CD4-positive, alpha-beta T cell (primary cell): ENCODE measurements at regions of chr1 and their contacts with region 1.

Region 1: DNA sequence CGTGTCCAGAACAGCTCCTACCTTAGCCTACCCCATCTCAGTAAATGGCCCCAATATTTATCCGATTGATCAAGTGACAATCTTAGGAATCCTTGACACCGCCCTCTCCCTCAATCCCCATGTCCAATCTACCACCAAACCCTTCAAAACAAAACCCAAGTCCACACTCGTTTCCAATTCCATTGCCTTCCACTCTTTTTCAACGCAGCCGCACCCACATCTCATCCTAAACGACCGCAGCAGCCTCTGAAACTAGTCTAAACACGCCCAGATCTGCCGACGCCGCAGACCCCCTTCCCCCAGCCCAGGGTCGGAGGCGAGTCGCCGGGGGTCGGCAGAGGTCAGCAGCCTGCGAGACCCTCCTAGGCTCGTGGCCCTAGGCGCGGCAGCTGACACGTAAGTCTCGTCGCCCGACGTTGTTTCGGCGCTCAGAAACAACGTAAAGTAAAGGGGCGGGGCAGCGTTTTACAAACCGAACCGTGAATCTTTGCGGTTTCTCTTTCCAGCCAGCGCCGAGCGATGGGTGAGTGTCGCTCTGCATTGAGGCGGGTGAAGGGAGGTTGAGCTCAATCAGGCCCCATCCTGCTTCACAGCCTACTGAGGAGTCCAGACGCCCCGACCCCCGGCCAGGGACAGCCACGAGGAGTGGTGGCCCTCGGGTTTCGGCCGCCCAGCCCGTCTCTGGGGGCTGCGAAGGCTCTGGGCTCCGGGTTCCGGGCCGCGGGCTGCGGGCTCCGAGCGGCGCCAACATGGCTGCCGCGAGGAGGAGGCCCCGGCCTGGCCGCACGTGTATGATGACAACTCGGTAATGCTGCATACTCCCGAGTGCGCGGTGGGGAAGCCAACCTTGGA is at the start of gene RPS8:
- DNase-seq: peak; percentile 82 to 95 (median 86)
- ATAC-seq: peak; percentile 83
- H3K4me3 ChIP-seq: peak within 1 kb of the TSS; percentile 77
- H3K4me3 Mint-ChIP-seq: peak within 1 kb of the TSS; percentile 90
- H3K27ac ChIP-seq: peak within 1 kb of the TSS; percentile 91
- H3K27ac Mint-ChIP-seq: peak within 1 kb of the TSS; percentile 89
- H3K4me1 ChIP-seq: peaks cover 33% of the 10 kb centered on the region
- H3K4me1 Mint-ChIP-seq: peaks cover 54% of the 10 kb centered on the region
- H3K27me3 ChIP-seq: no peaks in the 10 kb centered on the region
- H3K27me3 Mint-ChIP-seq: no peaks in the 10 kb centered on the region
- CTCF ChIP-seq: no peak
- total RNA-seq, gene RPS8: 3,394 to 3,436 TPM

Region 2: GRCh38 chr1:44631647-44632539 is 143.4 kb before region 1 on chr1:
- CTCF ChIA-PET with region 1: no interaction called
- POLR2A ChIA-PET with region 1: interaction called, 8 read pairs
- intact Hi-C with region 1: loop called in 1 of 2 experiments (anchors 5 kb)
- DNase-seq: peak; percentile 80 to 93 (median 86)
- ATAC-seq: peak; percentile 75
- H3K4me3 ChIP-seq: peak overlapping the region; percentile 71
- H3K4me3 Mint-ChIP-seq: peak overlapping the region; percentile 92
- H3K27ac ChIP-seq: peak overlapping the region; percentile 73 to 88
- H3K27ac Mint-ChIP-seq: peak overlapping the region; percentile 98
- H3K4me1 ChIP-seq: peaks cover 27% of the 10 kb centered on the region
- H3K4me1 Mint-ChIP-seq: peaks cover 48% of the 10 kb centered on the region
- H3K27me3 ChIP-seq: no peaks in the 10 kb centered on the region
- H3K27me3 Mint-ChIP-seq: no peaks in the 10 kb centered on the region
- CTCF ChIP-seq: no peak

Region 3: DNA sequence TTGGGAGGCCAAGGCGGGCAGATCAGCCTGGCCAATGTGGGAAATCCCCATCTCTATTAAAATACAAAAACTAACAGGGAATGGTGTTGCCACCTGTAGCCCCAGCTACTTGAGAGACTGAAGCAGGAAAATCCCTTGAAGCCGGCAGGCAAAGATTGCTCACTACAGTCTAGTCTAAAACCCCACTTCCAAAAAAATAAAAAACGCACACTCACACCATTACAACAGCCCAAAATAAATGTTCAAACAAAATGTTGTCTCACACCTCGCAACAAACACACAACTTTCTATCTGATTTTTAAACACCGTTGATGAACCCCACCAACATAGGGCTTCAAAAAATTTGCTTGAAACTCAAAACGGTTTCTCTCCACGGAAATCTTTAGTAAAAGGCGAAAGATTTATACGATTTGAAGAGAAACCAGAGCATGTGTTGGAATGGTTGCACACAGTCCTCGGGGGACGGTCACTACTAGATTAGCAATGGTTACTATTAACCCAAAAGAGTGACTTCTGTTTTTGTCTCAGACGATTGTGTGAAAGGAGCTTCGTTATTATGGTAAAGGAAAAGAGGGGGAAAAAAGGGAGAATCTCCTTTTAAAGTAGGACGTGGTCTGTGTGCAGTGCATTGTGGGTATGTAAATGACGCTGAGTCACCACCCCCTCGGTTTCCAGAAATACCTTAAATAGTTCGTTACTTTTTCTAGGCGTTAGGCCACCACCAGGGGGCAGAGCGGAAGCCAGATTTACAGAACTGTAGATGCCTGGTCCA is 44.4 kb before region 1 on chr1 and contains the start of gene RNU5D-1:
- CTCF ChIA-PET with region 1: interaction called, 20 read pairs
- POLR2A ChIA-PET with region 1: interaction called, 65 read pairs
- intact Hi-C with region 1: loop called (anchors 1 to 5 kb)
- DNase-seq: peak; percentile 87 to 98 (median 94)
- ATAC-seq: peak; percentile 76
- H3K4me3 ChIP-seq: peak within 1 kb of the TSS; percentile 46
- H3K4me3 Mint-ChIP-seq: peak within 1 kb of the TSS; percentile 68
- H3K27ac ChIP-seq: peak within 1 kb of the TSS; percentile 93 to 96
- H3K27ac Mint-ChIP-seq: peak within 1 kb of the TSS; percentile 97
- H3K4me1 ChIP-seq: peaks cover 33% of the 10 kb centered on the region
- H3K4me1 Mint-ChIP-seq: peaks cover 35% of the 10 kb centered on the region
- H3K27me3 ChIP-seq: no peaks in the 10 kb centered on the region
- H3K27me3 Mint-ChIP-seq: no peaks in the 10 kb centered on the region
- CTCF ChIP-seq: peak; percentile 77
- total RNA-seq, gene RNU5D-1: not detected

Region 4: DNA sequence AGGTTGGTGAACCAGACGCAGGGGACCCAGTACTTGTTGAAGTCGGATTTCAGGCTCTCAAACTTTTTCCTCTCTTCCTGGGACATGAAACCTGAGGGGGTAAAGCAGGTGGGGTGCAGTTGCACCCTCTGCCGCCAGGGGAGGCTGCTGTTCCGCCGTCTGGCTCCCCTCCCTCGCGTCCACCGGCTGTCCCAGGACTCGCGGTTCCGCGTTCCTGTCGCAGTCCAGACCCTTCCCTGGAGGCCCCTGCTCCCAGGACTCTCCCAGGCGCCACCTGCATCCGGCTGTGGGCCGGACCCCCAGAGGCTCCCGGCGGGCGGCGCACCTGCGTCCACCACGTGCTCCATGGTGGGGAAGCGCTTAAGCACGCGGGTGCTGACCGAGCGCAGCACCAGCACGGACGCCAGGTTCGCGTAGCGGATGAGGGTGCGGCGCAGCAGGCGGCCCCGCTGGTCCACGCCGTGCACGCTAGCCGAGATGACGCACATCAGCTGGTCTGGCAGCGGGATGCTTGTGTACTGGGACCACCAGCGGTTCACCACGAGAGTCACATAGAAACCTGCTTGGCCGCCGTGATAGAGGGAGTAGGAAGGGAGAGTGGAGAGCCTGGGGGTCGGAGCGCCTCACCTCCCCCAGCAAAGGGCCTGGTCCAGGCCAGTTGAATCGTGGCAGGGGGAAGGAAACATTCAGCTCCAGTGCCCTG is 11.0 kb after region 1 on chr1:
- CTCF ChIA-PET with region 1: interaction called, 11 read pairs
- POLR2A ChIA-PET with region 1: interaction called, 61 read pairs
- intact Hi-C with region 1: no loop called
- DNase-seq: peak; percentile 64 to 89 (median 74)
- ATAC-seq: peak; percentile 84
- H3K4me3 ChIP-seq: peak overlapping the region; percentile 58
- H3K4me3 Mint-ChIP-seq: peak overlapping the region; percentile 86
- H3K27ac ChIP-seq: peak overlapping the region; percentile 4 to 37
- H3K27ac Mint-ChIP-seq: peak overlapping the region; percentile 53
- H3K4me1 ChIP-seq: peaks cover 35% of the 10 kb centered on the region
- H3K4me1 Mint-ChIP-seq: peaks cover 31% of the 10 kb centered on the region
- H3K27me3 ChIP-seq: no peaks in the 10 kb centered on the region
- H3K27me3 Mint-ChIP-seq: no peaks in the 10 kb centered on the region
- CTCF ChIP-seq: peak; percentile 99

Region 5: GRCh38 chr1:44807262-44808062 is 32.2 kb after region 1 on chr1 and contains the start of gene DYNLT4:
- CTCF ChIA-PET with region 1: no interaction called
- POLR2A ChIA-PET with region 1: interaction called, 35 read pairs
- intact Hi-C with region 1: no loop called
- DNase-seq: peak; percentile 82 to 98 (median 94)
- ATAC-seq: peak; percentile 56
- H3K4me3 ChIP-seq: peak within 1 kb of the TSS; percentile 12
- H3K4me3 Mint-ChIP-seq: peak within 1 kb of the TSS; percentile 83
- H3K27ac ChIP-seq: peak within 1 kb of the TSS; percentile 99 to 100
- H3K27ac Mint-ChIP-seq: peak within 1 kb of the TSS; percentile 99
- H3K4me1 ChIP-seq: peaks cover 100% of the 10 kb centered on the region
- H3K4me1 Mint-ChIP-seq: peaks cover 79% of the 10 kb centered on the region
- H3K27me3 ChIP-seq: no peaks in the 10 kb centered on the region
- H3K27me3 Mint-ChIP-seq: peaks cover 4% of the 10 kb centered on the region
- CTCF ChIP-seq: no peak
- total RNA-seq, gene DYNLT4: 1.8 to 2.1 TPM

Region 6: GRCh38 chr1:44985747-44986359 is 210.5 kb after region 1 on chr1:
- CTCF ChIA-PET with region 1: no interaction called
- POLR2A ChIA-PET with region 1: interaction called, 6 read pairs
- intact Hi-C with region 1: loop called in 1 of 2 experiments (anchors 2 kb)
- DNase-seq: no peak
- ATAC-seq: no peak
- H3K4me3 ChIP-seq: peak overlapping the region; percentile 73
- H3K4me3 Mint-ChIP-seq: peak overlapping the region; percentile 99
- H3K27ac ChIP-seq: no peak overlapping the region
- H3K27ac Mint-ChIP-seq: peak overlapping the region; percentile 74
- H3K4me1 ChIP-seq: peaks cover 20% of the 10 kb centered on the region
- H3K4me1 Mint-ChIP-seq: peaks cover 32% of the 10 kb centered on the region
- H3K27me3 ChIP-seq: no peaks in the 10 kb centered on the region
- H3K27me3 Mint-ChIP-seq: no peaks in the 10 kb centered on the region
- CTCF ChIP-seq: no peak